ENCODE measurements at regions of chr22 and their contacts with region 1.

Region 1: DNA sequence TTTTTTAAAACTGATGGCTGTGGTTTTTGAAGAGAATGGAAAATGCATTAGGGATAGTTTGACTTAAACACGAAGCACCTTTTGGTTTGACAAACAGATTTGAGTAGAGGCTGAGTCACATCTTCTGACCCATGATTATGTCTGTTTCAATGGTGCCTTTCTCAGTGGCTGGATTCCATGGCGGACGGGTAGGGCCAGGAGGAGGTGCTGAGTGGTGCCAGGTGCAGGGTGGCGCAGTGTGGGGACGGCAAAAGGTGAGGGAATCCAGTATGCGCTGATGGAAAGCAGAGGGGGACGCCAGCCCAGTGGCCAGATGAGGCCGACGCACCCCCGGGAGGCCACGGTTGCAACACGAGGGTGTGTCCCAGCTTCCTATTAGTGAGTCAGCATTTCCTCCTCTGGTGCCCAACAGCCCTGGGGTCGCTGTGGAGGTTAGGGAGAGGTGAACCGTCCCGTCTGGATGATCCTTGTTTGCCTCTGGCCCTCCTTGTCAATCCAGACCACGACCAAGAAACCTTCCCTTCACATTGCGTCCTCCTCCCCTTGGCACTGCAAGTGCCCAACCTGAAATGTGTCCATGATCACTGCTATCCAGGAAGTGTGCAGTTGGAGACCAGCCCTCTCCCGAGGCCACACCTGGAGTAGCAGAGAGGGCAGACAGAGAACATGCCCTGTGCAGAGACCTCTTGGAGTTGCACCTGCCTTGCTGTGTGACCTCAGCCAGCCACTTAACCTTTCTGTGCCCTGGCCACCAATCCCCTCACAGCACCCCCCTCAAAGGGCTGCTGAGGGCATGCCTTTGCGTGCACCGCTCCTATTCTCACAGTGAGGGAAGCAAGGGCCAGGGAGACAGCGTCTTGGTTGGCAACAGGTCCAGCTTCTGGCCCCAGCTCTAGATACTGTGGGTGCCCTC is 32.5 kb upstream of the ATXN10 start:
- DNase-seq: peak; percentile 79
- H3K4me3 ChIP-seq: no peak overlapping the region
- H3K27ac ChIP-seq: peak overlapping the region; percentile 78
- H3K4me1 ChIP-seq: peaks cover 22% of the 10 kb centered on the region
- H3K27me3 ChIP-seq: no peaks in the 10 kb centered on the region
- CTCF ChIP-seq: peak in 1 of 2 donors; percentile 13

Region 2: DNA sequence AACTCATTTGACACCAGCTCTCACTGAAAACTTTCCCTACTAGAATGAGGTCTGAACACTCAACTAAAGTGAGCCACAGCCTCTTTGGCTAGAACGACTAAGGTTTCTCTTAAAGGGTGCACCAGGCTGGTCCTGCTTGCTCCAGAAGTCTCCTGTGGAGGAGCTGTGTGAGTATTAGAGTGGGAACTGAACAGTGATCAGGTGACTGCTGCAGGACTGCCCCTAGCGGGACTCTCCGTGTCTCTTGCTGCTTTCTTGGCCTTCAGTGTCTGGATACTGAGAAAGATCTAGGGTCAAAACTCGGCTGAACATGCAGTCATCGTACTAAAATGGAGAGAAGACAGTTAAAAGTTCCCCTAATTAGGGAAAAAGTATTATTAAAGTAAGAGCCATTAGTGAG is 294.8 kb before region 1 on chr22:
- CTCF ChIA-PET with region 1: no interaction called
- dilution Hi-C with region 1: no loop called
- in situ Hi-C with region 1: no loop called
- intact Hi-C with region 1: no loop called
- DNase-seq: no peak
- H3K4me3 ChIP-seq: no peak overlapping the region
- H3K27ac ChIP-seq: no peak overlapping the region
- H3K4me1 ChIP-seq: no peaks in the 10 kb centered on the region
- H3K27me3 ChIP-seq: no peaks in the 10 kb centered on the region
- CTCF ChIP-seq: no peak

Region 3: GRCh38 chr22:45602824-45603630 is 36.1 kb before region 1 on chr22:
- CTCF ChIA-PET with region 1: no interaction called
- dilution Hi-C with region 1: loop called (anchors 5 kb)
- in situ Hi-C with region 1: no loop called
- intact Hi-C with region 1: loop called (anchors 2 kb)
- DNase-seq: no peak
- H3K4me3 ChIP-seq: no peak overlapping the region
- H3K27ac ChIP-seq: peak overlapping the region; percentile 83
- H3K4me1 ChIP-seq: peaks cover 37% of the 10 kb centered on the region
- H3K27me3 ChIP-seq: no peaks in the 10 kb centered on the region
- CTCF ChIP-seq: no peak

Region 4: DNA sequence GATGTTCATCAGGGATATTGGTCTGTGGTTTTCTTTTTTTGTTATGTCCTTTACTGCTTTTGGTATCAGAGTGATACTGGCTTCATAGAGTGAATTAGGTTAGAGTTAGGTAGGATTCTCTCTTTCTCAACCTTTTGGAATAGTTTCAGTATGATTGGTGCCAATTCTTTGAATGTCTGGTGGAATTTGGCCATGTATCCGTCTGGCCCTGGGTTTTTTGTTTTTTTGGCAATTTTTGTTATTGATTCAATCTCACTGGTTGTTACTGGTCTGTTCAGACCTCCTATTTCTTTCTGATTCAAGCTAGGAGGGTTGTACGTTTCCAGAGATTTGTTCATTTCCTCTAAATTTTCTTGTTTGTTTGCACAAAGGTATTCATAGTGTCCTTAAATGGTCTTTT is 87.0 kb after region 1 on chr22:
- CTCF ChIA-PET with region 1: no interaction called
- dilution Hi-C with region 1: loop called (anchors 5 kb)
- in situ Hi-C with region 1: no loop called
- intact Hi-C with region 1: no loop called
- DNase-seq: no peak
- H3K4me3 ChIP-seq: no peak overlapping the region
- H3K27ac ChIP-seq: no peak overlapping the region
- H3K4me1 ChIP-seq: peaks cover under 1% of the 10 kb centered on the region
- H3K27me3 ChIP-seq: no peaks in the 10 kb centered on the region
- CTCF ChIP-seq: no peak

Region 5: DNA sequence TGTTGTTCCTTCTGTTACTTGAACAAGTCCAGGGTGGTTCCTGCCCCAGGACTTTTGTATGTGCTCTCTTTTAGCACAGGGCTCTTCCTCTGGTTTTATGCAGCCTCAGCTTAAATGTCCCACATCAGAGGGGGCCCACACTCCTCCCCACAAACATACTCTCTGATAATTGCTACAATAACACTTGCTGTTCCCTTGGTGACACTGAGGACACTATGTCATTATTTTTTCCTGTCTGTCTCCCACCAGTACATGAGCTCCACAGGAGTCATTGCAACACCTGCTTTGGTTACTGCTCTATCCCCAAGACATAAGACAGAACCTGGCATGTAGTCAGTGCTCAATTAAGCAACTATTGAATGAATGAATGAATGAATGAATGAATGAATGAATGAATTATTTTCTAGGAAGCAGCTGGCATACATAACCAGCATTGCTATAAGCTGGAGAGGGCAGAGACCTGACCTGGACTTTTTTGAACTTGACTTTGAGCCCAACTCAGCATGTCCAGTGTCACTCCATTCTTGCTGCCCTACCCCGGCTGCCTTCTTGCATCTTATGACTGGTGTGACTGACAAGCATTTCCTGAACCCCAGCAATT is 345.3 kb after region 1 on chr22:
- CTCF ChIA-PET with region 1: no interaction called
- dilution Hi-C with region 1: loop called (anchors 5 kb)
- in situ Hi-C with region 1: loop called in 1 of 2 experiments (anchors 10 kb)
- intact Hi-C with region 1: no loop called
- DNase-seq: no peak
- H3K4me3 ChIP-seq: no peak overlapping the region
- H3K27ac ChIP-seq: no peak overlapping the region
- H3K4me1 ChIP-seq: no peaks in the 10 kb centered on the region
- H3K27me3 ChIP-seq: no peaks in the 10 kb centered on the region
- CTCF ChIP-seq: no peak

Measured in mammary epithelial cell (primary cell).